Activated T-helper 1 cell treated with anti-CD3 and anti-CD28 coated beads, Interleukin-12 subunit alpha, Interleukin-12 subunit beta, Interleukin-2, Interleukin-4 antibody, amounts not matched to agents 30 ng/mL and 10 ng/mL and 1 ng/mL, durations not matched to agents 14 hours and 24 hours and 36 hours (primary cell): ENCODE measurements at regions of chr9 and their contacts with region 1.

Region 1: GRCh38 chr9:75142202-75142601 is 53.9 kb downstream of the OSTF1 start:
- DNase-seq: no peak
- H3K4me3 Mint-ChIP-seq: peak overlapping the region; percentile 31
- H3K27ac Mint-ChIP-seq: peak overlapping the region; percentile 74
- H3K4me1 Mint-ChIP-seq: peaks cover 58% of the 10 kb centered on the region
- H3K27me3 Mint-ChIP-seq: no peaks in the 10 kb centered on the region

Region 2: GRCh38 chr9:75130621-75131230 is 11.5 kb before region 1 on chr9:
- intact Hi-C with region 1: loop called (anchors 1 kb)
- DNase-seq: no peak
- H3K4me3 Mint-ChIP-seq: no peak overlapping the region
- H3K27ac Mint-ChIP-seq: peak overlapping the region; percentile 35
- H3K4me1 Mint-ChIP-seq: peaks cover 56% of the 10 kb centered on the region
- H3K27me3 Mint-ChIP-seq: no peaks in the 10 kb centered on the region

Region 3: GRCh38 chr9:75226403-75227139 is 84.4 kb after region 1 on chr9:
- intact Hi-C with region 1: no loop called
- DNase-seq: no peak
- H3K4me3 Mint-ChIP-seq: no peak overlapping the region
- H3K27ac Mint-ChIP-seq: no peak overlapping the region
- H3K4me1 Mint-ChIP-seq: no peaks in the 10 kb centered on the region
- H3K27me3 Mint-ChIP-seq: peaks cover 6% of the 10 kb centered on the region